Colonic mucosa (tissue), 4 donors: ENCODE measurements at regions of chr10 and their contacts with region 1.

Region 1: GRCh38 chr10:75099952-75100763 is 11.3 kb upstream of the SAMD8 start:
- DNase-seq: peak; percentile 80
- H3K4me3 ChIP-seq: no peak overlapping the region
- H3K27ac ChIP-seq: no peak overlapping the region
- H3K4me1 ChIP-seq: no peaks in the 10 kb centered on the region
- H3K27me3 ChIP-seq: no peaks in the 10 kb centered on the region
- CTCF ChIP-seq: peak; percentile 98

Region 2: GRCh38 chr10:74249865-74250264 is 850.3 kb before region 1 on chr10:
- intact Hi-C with region 1: loop called (anchors 5 kb)
- DNase-seq: no peak
- H3K4me3 ChIP-seq: no peak overlapping the region
- H3K27ac ChIP-seq: no peak overlapping the region
- H3K4me1 ChIP-seq: no peaks in the 10 kb centered on the region
- H3K27me3 ChIP-seq: no peaks in the 10 kb centered on the region
- CTCF ChIP-seq: no peak

Region 3: GRCh38 chr10:74262856-74263255 is 837.3 kb before region 1 on chr10:
- intact Hi-C with region 1: loop called (anchors 5 kb)
- DNase-seq: no peak
- H3K4me3 ChIP-seq: no peak overlapping the region
- H3K27ac ChIP-seq: no peak overlapping the region
- H3K4me1 ChIP-seq: no peaks in the 10 kb centered on the region
- H3K27me3 ChIP-seq: no peaks in the 10 kb centered on the region
- CTCF ChIP-seq: no peak